MCF 10A (cell line): ENCODE measurements at regions of chr2 and their contacts with region 1.

Region 1: GRCh38 chr2:144261336-144261735 is 258.6 kb downstream of the ZEB2 start:
- DNase-seq: peak; percentile 4
- H3K4me3 Mint-ChIP-seq: no peak overlapping the region
- H3K27ac Mint-ChIP-seq: no peak overlapping the region
- H3K4me1 Mint-ChIP-seq: peaks cover 10% of the 10 kb centered on the region
- H3K27me3 Mint-ChIP-seq: no peaks in the 10 kb centered on the region
- CTCF ChIP-seq: no peak

Region 2: DNA sequence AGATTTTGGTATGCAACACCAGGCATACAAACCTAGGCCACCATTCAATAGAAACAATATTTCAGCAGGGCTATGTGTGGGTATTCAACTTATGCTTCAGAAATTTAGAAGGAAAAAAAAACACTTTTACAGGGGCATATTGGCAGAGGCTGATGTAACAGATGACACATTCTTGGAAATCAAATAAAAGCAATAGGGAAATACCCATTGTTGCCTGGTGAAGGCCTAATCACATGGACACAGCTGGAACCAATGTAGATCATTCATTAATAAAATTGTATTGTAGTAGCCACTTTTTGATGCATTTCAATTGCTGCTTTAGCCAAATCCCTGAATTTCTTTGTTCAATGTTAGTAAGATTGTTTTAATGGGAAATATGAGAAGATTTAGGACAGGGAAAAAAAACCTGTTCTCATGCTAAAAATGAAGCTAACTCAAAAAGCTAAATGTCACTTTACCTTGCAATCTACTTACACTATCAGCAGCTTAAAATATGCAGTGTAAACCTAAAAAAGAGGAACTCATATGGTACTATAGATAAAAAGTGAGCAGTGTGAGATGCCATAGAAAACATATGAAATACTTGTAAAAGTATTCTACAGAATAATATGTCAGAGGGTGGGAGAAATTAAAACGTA is 30.8 kb before region 1 on chr2:
- CTCF ChIA-PET with region 1: no interaction called
- POLR2A ChIA-PET with region 1: no interaction called
- intact Hi-C with region 1: no loop called
- DNase-seq: peak; percentile 13
- H3K4me3 Mint-ChIP-seq: no peak overlapping the region
- H3K27ac Mint-ChIP-seq: no peak overlapping the region
- H3K4me1 Mint-ChIP-seq: peaks cover 9% of the 10 kb centered on the region
- H3K27me3 Mint-ChIP-seq: no peaks in the 10 kb centered on the region
- CTCF ChIP-seq: no peak

Region 3: DNA sequence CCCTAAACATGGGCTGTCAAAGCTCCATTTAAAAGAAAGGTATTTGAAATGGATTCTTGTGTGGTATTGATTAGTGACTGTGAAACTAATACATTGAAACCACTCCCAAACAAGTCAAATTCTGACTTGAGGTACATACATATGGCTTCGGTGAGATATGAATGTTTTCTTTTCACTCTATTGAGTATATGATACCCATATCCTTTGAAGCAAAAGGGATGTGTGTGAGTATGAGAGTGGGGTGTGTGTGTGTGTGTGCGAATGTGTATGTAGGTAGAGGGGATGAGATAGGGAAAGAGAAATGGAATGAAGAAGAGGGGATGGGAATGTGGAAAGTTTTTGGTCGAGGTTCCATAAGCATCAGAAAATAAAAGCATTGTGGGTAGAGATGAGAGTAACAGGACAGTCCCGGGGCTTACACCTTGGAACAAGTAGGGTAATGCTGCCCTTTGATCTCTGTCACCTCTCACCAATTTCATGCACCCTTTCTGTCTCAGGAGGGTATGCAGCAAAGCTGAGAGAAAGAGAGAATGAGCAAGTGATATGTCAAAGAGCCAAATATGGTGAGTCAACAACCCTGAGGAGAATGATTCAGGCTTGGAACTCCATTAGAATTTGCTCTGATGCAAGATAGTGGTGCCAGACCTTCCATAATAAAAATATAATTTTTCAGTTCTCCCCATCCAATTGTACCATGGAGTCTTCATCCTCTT is 322.6 kb after region 1 on chr2:
- CTCF ChIA-PET with region 1: no interaction called
- POLR2A ChIA-PET with region 1: no interaction called
- intact Hi-C with region 1: loop called (anchors 5 kb)
- DNase-seq: peak; percentile 87
- H3K4me3 Mint-ChIP-seq: no peak overlapping the region
- H3K27ac Mint-ChIP-seq: peak overlapping the region; percentile 57
- H3K4me1 Mint-ChIP-seq: peaks cover 21% of the 10 kb centered on the region
- H3K27me3 Mint-ChIP-seq: no peaks in the 10 kb centered on the region
- CTCF ChIP-seq: no peak